A549 (cell line): ENCODE measurements at regions of chr20 and their contacts with region 1.

Region 1: DNA sequence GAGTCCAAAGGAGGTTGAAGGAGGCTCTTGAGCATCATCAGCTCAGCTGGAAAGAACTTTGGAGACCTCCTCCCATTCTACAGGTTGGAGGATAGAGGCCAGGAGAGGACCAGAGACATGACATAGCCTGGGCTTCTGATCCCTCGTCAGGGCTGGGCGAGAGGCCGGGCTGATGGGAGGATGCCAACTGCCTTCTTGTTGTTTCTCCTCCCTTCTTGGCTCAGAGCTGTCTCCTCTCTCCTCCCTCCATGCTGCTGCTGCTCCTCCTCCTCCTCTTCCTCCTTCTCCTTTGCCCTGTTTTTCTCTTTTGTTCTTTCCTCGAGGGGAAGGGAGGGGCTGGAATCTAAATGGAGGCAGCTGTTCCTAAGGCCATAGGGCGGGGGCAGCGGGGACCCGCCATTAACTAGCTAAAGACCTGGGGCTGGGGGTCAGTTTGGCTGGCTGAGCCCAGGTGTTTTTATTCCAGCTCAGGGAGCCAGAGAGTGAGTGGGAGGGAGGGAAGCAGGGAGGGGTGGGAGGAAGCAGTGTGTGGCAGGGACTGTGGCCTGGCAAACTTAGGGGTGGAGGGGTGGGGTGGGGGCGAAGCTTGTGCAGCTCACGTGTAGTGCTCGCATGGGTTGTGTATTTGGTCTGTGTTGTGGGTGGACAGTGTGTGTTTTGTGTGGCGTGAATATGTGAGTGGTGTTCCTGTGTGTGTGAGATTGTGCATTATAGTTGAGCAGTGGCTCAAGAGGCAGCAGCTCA is 84.8 kb downstream of the CD40 start:
- DNase-seq: no peak
- ATAC-seq: no peak
- H3K4me3 ChIP-seq: no peak overlapping the region
- H3K27ac ChIP-seq: no peak overlapping the region
- H3K4me1 ChIP-seq: peaks cover 18% of the 10 kb centered on the region
- CTCF ChIP-seq: no peak
- EP300 ChIP-seq: no peak
- POLR2A ChIP-seq: no peak
- RAD21 ChIP-seq: no peak

Region 2: DNA sequence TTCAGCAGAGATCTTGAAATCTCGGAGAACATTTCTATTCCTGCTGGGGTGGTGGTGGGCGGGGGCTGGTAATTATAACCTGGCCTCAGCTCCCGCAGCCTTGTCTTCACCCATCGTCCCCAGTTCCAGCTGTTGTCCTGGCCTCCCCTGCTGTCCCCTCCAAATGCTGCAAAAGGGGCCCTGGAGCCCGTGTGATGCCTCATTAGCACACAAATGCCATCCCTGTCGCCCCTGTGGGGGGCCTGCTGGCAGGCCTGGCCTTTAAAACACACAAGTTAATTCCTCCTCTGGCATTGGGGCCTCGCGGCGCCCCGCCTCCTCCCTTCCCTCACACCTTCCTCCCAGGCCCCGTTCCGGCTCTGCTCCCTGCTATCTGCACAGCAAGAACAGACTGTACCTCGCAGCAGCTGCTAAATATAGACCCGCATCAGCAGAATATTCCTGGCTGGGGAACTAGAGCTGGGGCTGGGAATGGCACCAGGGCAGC is 19.6 kb after region 1 on chr20:
- CTCF ChIA-PET with region 1: no interaction called
- POLR2A ChIA-PET with region 1: interaction called, 10 read pairs
- DNase-seq: no peak
- ATAC-seq: no peak
- H3K4me3 ChIP-seq: no peak overlapping the region
- H3K27ac ChIP-seq: no peak overlapping the region
- H3K4me1 ChIP-seq: 0 out of 3 replicates have a peak, but pooled peaks cover 4% of the 10 kb centered on the region
- CTCF ChIP-seq: no peak
- EP300 ChIP-seq: no peak
- POLR2A ChIP-seq: no peak
- RAD21 ChIP-seq: no peak

Region 3: GRCh38 chr20:46240881-46241280 is 37.9 kb after region 1 on chr20:
- CTCF ChIA-PET with region 1: no interaction called
- POLR2A ChIA-PET with region 1: no interaction called
- DNase-seq: no peak
- ATAC-seq: no peak
- H3K4me3 ChIP-seq: no peak overlapping the region
- H3K27ac ChIP-seq: no peak overlapping the region
- H3K4me1 ChIP-seq: no peaks in the 10 kb centered on the region
- CTCF ChIP-seq: no peak
- EP300 ChIP-seq: no peak
- POLR2A ChIP-seq: no peak
- RAD21 ChIP-seq: no peak

Region 4: GRCh38 chr20:46293084-46293483 is 90.1 kb after region 1 on chr20:
- CTCF ChIA-PET with region 1: no interaction called
- POLR2A ChIA-PET with region 1: no interaction called
- DNase-seq: peak; percentile 31 to 40
- ATAC-seq: peak; percentile 67 to 75
- H3K4me3 ChIP-seq: no peak overlapping the region
- H3K27ac ChIP-seq: no peak overlapping the region
- H3K4me1 ChIP-seq: no peaks in the 10 kb centered on the region
- CTCF ChIP-seq: no peak
- EP300 ChIP-seq: no peak
- POLR2A ChIP-seq: no peak
- RAD21 ChIP-seq: no peak